Activated CD4-positive, alpha-beta T cell treated with anti-CD3 and anti-CD28 coated beads for 36 hours (primary cell): ENCODE measurements at regions of chr1 and their contacts with region 1.

Region 1: DNA sequence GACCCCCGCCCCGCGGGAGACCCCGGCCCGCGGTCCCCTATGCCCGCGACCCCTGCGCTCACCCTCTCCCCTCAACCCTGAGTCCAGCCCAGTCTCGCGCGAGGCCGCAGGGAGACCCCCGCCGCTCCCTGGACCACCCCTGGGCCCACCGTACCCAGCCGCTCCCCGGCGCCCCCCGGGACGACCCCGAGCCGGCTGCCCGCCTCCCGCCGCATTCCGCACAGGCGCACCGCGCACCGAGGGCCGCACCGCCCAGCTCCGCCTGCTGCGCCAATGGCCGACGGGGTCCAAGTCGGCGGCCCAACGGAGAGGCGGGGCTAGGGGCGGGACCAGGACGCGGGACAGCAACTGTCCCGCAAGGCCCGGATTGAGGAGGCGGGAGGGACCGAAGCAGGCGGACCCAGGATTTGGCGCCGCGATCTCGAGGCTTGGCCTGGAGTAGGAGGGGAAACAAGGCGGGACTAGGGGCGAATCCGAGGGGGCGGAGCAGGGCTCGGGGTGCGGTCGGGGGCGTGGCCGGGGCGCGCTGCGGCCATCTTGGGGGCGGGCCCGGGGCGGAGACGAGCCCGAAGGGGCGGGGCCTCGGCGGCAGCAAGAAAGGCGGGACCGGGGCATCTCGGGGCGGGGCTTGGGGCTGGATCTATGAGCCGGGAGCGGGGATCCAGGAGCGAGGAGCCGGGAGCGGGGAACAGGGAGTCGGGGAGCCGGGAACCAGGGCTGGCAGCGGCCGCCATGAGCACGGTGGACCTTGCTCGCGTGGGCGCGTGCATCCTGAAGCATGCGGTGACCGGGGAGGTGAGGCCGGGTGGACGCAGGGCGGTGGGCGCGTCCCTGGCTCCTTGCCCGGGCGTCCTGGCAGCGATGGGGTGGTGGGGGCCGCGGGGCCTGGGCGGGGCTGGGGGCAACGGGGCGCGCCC is at the start of gene PRXL2B:
- DNase-seq: peak; percentile 98
- ATAC-seq: peak; percentile 72
- H3K4me3 Mint-ChIP-seq: peak within 1 kb of the TSS; percentile 82
- H3K27ac Mint-ChIP-seq: peak within 1 kb of the TSS; percentile 94
- H3K4me1 Mint-ChIP-seq: peaks cover 42% of the 10 kb centered on the region
- H3K27me3 Mint-ChIP-seq: no peaks in the 10 kb centered on the region
- total RNA-seq, gene PRXL2B: 23.7 to 36.8 TPM

Region 2: GRCh38 chr1:2133039-2133878 is 453.2 kb before region 1 on chr1:
- CTCF ChIA-PET with region 1: no interaction called
- POLR2A ChIA-PET with region 1: no interaction called
- intact Hi-C with region 1: loop called in 1 of 2 experiments (anchors 1 kb)
- DNase-seq: peak; percentile 99
- ATAC-seq: peak; percentile 94
- H3K4me3 Mint-ChIP-seq: peak overlapping the region; percentile 68
- H3K27ac Mint-ChIP-seq: peak overlapping the region; percentile 82
- H3K4me1 Mint-ChIP-seq: peaks cover 14% of the 10 kb centered on the region
- H3K27me3 Mint-ChIP-seq: no peaks in the 10 kb centered on the region

Region 3: DNA sequence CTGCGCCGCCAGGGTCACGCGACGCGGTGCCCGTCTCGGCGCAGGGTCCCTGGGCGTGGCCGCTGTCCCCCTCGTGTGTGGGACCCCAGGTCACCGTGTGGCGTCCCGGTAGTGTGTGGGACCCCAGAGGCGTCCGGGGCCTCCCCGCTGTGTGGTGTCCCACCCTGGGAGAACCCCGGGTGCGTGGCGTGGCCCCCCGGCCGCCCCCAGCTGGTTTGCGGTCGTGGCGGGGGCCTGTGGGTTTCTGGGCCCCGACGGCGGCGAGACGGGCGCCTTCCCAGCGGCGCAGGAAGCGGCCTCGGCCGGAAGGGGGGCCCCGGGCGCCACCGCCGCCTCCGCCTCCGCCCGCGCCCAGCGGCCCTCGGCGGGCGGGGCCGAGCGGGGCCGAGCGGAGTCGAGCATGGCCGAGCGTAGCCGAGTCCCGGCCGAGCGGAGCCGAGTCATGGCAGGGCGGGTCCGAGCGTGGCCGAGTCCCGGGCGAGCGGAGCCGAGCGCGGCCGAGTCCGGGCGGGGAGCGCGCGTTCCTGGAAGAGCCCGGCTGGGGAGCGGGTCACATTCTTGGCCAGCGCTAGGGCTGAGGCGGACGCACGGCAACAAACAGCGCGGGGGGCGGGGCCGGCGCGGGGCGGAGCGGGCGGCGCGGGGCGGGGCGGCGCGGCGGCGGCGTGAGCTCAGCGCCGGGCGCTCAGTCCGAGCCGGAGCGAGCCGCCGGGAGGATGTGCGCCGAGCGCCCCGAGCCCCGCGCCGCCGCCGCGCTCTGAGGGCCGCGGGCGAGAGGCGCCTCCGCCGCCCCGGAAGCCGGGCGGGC is 358.9 kb before region 1 on chr1:
- CTCF ChIA-PET with region 1: no interaction called
- POLR2A ChIA-PET with region 1: no interaction called
- intact Hi-C with region 1: loop called in 1 of 2 experiments (anchors 1 kb)
- DNase-seq: peak; percentile 98
- ATAC-seq: peak; percentile 94
- H3K4me3 Mint-ChIP-seq: peak overlapping the region; percentile 32
- H3K27ac Mint-ChIP-seq: no peak overlapping the region
- H3K4me1 Mint-ChIP-seq: peaks cover 6% of the 10 kb centered on the region
- H3K27me3 Mint-ChIP-seq: no peaks in the 10 kb centered on the region

Region 4: DNA sequence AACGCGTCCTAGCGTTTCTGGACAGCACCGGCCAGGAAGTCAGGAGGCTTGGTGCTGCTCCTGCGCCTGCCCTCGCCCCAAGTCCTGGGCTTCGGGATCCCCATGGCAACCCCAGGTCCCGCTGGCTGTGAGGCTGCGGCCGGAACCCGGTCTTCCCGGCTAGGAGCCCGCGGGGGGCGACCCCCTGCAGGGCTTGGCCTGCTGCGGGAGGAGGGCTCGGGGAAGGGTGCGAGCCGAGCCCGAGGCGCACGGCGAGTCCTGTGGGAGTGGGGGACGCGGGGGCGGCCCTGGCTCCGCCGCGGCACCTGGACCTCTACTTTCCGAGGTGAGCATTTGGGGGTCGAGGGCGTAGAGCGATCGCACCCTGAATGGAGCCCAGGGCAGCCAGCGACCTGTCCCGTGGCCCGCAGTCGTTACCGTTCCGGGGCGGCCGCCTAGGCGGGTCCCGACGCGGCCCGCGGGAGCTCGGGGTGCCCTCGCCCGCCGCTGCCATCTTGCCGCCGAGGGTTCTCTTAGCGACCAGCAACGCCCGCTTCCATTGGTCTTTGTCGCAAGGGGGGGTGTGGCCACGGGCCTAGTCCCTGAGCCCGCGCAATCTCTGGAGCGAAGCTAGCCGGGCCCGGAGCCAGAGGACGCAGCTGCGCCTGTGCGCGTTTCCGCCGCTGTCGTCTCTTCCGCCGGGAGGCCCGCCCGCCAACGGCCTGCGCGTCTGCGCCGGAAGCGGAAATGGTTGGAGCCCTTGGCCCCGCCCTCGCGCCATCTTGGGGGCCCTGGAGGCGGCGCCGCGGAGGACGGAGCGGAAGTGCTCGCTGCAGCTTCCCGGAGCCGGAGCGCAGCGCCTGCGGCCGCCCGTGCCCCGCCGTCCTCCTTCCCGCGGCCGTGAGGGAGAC is 195.1 kb before region 1 on chr1 and contains the starts of genes MORN1 and RER1:
- CTCF ChIA-PET with region 1: no interaction called
- POLR2A ChIA-PET with region 1: no interaction called
- intact Hi-C with region 1: loop called in 1 of 2 experiments (anchors 1 kb)
- DNase-seq: peak; percentile 100
- ATAC-seq: peak; percentile 99
- H3K4me3 Mint-ChIP-seq: peak within 1 kb of the TSS; percentile 89
- H3K27ac Mint-ChIP-seq: peak within 1 kb of the TSS; percentile 76
- H3K4me1 Mint-ChIP-seq: peaks cover 38% of the 10 kb centered on the region
- H3K27me3 Mint-ChIP-seq: no peaks in the 10 kb centered on the region
- total RNA-seq, gene MORN1: 5.1 to 6.1 TPM
- total RNA-seq, gene RER1: 146 to 152 TPM

Region 5: DNA sequence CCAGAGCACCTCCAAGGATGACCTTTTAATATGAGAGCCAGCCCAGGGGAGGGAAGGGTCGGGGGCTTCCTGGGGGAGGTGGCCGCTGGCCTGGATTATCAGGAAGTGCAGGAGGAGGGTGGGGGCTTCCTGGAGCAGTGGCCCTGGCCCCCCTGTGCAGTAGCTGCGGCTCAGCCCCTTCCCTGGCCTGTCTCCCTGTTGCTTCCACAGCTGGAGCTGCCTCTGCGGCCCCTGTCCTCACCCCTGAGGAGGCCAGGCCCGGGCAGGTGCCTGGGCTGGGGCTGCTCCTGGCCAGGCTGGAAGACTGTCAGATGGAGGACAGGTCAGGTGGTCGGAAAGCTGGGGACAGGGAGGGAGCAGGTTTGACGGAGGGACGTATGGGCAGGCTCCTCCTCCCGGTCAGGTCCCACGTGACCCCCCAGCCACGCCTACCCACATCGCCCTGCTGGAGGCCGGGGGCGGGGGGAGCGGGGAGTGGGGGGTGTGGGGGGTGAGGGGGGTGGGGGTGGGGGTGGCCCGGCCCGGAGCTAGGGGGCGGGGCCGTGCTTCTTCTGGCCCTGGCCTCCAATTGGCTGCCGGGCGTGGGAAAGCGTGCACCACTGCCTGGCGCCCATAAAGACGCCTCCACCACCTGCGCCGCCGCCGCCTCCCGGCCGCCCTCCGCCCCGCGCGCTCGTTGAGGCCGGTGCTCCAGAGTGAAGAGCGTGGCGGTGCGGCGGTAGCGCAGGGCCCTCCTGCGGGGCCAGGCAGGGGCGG is 40.5 kb before region 1 on chr1:
- CTCF ChIA-PET with region 1: interaction called, 7 read pairs
- POLR2A ChIA-PET with region 1: interaction called, 9 read pairs
- intact Hi-C with region 1: loop called (anchors 1 to 2 kb)
- DNase-seq: peak; percentile 94
- ATAC-seq: peak; percentile 34
- H3K4me3 Mint-ChIP-seq: peak overlapping the region; percentile 78
- H3K27ac Mint-ChIP-seq: no peak overlapping the region
- H3K4me1 Mint-ChIP-seq: peaks cover 16% of the 10 kb centered on the region
- H3K27me3 Mint-ChIP-seq: no peaks in the 10 kb centered on the region

Region 6: GRCh38 chr1:2642560-2643413 is 56.4 kb after region 1 on chr1:
- CTCF ChIA-PET with region 1: no interaction called
- POLR2A ChIA-PET with region 1: no interaction called
- intact Hi-C with region 1: loop called (anchors 1 to 2 kb)
- DNase-seq: peak; percentile 97
- ATAC-seq: peak; percentile 86
- H3K4me3 Mint-ChIP-seq: peak overlapping the region; percentile 80
- H3K27ac Mint-ChIP-seq: peak overlapping the region; percentile 83
- H3K4me1 Mint-ChIP-seq: no peaks in the 10 kb centered on the region
- H3K27me3 Mint-ChIP-seq: no peaks in the 10 kb centered on the region